GM10248 (cell line): ENCODE measurements at regions of chr9 and their contacts with region 1.

Region 1: GRCh38 chr9:35341585-35341984 is 148.3 kb upstream of the RUSC2 start:
- DNase-seq: no peak
- CTCF ChIP-seq: no peak

Region 2: DNA sequence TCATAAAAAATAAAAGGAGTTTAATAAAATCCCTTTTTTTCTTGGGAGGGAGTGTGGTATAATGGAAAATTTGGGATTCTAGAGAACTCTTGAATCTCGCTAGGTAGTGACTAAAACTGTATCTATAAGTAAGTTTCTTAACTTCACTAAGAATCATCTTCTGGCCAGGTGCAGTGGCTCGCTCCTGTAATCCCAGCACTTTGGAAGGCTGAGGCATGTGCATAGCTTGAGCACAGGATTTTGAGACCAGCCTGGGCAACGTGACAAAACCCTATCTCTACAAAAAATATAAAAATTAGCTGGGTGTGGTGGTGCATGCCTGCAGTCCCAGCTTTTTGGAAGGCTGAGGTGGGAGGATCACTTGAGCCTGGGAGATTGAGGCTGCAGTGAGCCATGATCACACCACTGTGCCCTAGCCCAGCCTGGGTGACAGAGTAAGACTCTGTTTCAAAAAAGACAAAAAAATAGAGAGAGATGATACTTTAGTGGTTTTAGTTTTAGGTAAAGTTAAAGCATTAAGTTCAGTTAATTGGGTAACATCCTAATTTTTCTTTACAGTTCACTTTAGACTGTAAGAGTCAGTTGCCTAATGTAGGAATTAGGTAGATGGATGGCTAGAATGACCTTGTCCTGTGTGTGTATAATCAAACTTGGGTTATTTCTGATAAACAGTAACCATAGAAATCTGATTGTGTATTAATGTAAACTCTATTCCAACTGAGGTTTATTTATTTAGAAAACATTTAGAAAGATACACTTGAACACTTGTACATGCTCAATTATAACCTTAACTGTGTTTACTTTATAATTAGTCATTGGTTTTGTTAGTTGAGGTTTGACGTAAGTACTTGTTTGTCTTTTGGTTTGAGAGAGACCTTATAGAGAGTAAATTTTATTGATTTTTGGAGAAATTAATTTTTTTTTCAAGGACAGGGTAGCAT is 162.0 kb before region 1 on chr9:
- CTCF ChIA-PET with region 1: no interaction called
- POLR2A ChIA-PET with region 1: no interaction called
- DNase-seq: no peak
- CTCF ChIP-seq: no peak

Region 3: GRCh38 chr9:35353731-35354365 is 12.3 kb after region 1 on chr9:
- CTCF ChIA-PET with region 1: interaction called, 13 read pairs
- POLR2A ChIA-PET with region 1: no interaction called
- DNase-seq: no peak
- CTCF ChIP-seq: no peak